ENCODE measurements at regions of chr17 and their contacts with region 1.

Region 1: DNA sequence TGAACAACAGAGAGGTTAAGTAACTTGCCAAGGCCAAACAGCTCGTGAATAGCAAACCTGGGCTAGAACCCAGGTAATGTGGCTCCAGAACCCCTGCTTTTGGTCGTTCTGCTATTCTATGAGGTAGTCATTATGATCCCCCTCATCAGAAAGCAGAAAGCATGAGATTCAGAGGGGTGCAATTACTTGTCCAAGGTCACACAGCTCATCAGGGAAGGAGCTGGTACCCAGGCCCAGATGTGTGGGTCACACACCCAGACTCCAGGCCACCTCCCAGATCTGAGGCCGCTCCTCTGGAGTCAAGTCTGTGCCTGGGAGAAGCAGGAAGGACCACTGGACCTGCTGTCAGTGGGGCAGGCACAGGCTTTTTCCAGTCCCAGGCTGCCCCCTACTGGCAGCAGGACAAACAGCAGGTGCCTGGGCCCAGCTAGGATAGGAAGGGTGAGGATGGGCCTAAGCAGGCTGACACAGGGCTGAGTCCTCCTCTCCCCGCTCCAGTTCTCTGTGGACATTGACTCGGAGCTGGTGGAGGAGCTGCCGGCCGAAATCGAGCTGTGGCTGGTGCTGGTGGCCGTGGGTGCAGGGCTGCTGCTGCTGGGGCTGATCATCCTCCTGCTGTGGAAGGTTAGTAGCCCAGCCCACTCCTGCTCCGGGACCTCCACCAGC is 7.8 kb upstream of the PDK2 start:
- DNase-seq: peak; percentile 87 to 93
- ATAC-seq: peak; percentile 76 to 93
- H3K4me3 ChIP-seq: no peak overlapping the region
- H3K27ac ChIP-seq: peak overlapping the region in 1 of 2 experiments; percentile 37; a peak in 2 of 6 replicates
- H3K4me1 ChIP-seq: no peaks in the 10 kb centered on the region
- CTCF ChIP-seq: peak; percentile 97
- EP300 ChIP-seq: no peak
- POLR2A ChIP-seq: no peak
- RAD21 ChIP-seq: peak; percentile 97 to 99

Region 2: DNA sequence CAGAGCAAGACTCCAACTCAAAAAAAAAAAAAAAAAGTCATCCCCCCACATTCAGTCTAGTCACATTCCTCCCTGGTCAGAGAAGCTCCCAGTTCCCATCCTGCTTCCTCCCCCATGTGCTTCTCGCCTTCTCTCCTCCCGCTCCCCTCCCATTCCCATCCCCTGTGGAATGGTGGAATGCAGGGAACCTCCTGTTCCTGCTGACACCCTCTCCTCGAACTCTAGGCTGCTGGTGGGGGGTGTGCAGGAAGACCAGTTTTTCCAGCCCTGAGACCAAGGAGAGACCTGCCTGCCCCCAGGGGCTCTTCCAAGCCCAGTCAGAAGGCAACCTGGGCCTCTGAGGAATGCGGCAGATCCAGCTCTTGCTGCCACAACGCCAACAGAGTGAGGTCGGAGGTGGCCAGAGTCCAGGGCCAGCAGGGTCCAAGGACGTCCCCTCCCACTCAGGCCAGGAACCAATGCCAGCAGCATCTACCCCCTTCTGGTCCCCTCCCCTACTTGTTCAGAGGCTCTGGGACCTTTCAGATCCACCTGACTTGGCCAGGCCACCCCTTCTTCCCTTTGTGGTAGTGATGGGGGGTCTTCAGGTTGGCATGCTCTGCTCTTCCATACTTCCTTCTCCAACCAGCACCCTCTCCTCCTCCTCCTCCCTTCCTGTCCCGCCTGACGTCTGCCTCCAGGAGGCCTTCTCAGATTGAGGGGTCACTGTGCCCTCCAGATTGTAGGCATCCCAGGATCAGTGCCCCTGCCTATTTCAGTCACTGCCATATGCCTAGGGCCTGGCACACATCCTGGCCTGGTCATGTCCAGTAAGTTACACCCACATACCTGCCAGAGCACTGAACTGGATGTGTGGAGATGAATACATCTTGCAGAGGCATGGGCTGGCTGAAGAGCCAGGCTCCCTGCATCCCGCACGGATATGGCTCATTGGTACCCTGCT is 200.0 kb before region 1 on chr17:
- CTCF ChIA-PET with region 1: no interaction called
- POLR2A ChIA-PET with region 1: no interaction called
- DNase-seq: no peak
- ATAC-seq: no peak
- H3K4me3 ChIP-seq: no peak overlapping the region
- H3K27ac ChIP-seq: no peak overlapping the region
- H3K4me1 ChIP-seq: no peaks in the 10 kb centered on the region
- CTCF ChIP-seq: no peak
- EP300 ChIP-seq: no peak
- POLR2A ChIP-seq: no peak
- RAD21 ChIP-seq: no peak

Region 3: DNA sequence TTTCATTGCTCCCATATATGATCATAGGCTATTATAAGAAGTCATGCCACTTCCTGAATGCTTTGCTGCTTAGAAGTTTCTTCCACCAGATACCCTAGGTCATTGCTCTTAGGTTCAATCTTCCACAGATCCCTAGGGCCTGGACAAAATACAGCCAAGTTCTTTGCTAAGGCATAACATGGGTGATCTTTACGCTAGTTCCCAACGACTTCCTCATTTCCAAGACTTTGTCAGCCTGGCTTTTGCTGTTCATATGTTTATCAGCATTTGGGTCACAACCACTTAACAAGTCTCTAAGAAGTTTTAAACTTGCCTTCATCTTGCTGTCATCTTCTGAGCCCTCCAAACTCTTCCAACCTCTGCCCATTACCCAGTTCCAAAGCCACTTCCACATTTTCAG is 72.2 kb before region 1 on chr17:
- CTCF ChIA-PET with region 1: interaction called, 30 read pairs
- POLR2A ChIA-PET with region 1: no interaction called
- DNase-seq: no peak
- ATAC-seq: no peak
- H3K4me3 ChIP-seq: no peak overlapping the region
- H3K27ac ChIP-seq: no peak overlapping the region
- H3K4me1 ChIP-seq: no peaks in the 10 kb centered on the region
- CTCF ChIP-seq: no peak
- EP300 ChIP-seq: no peak
- POLR2A ChIP-seq: no peak
- RAD21 ChIP-seq: no peak

Region 4: GRCh38 chr17:50037321-50038071 is 49.9 kb before region 1 on chr17:
- CTCF ChIA-PET with region 1: interaction called, 200 read pairs
- POLR2A ChIA-PET with region 1: no interaction called
- DNase-seq: peak in 1 of 2 experiments; percentile 77
- ATAC-seq: peak; percentile 85 to 94
- H3K4me3 ChIP-seq: no peak overlapping the region
- H3K27ac ChIP-seq: peak overlapping the region; percentile 82 to 88
- H3K4me1 ChIP-seq: peaks cover 43% of the 10 kb centered on the region
- CTCF ChIP-seq: no peak
- EP300 ChIP-seq: peak in 1 of 2 experiments; percentile 46; a peak in 1 of 5 replicates
- POLR2A ChIP-seq: no peak
- RAD21 ChIP-seq: 0 out of 5 replicates have a peak, but pooled peaks have one; percentile 16 to 22

Region 5: DNA sequence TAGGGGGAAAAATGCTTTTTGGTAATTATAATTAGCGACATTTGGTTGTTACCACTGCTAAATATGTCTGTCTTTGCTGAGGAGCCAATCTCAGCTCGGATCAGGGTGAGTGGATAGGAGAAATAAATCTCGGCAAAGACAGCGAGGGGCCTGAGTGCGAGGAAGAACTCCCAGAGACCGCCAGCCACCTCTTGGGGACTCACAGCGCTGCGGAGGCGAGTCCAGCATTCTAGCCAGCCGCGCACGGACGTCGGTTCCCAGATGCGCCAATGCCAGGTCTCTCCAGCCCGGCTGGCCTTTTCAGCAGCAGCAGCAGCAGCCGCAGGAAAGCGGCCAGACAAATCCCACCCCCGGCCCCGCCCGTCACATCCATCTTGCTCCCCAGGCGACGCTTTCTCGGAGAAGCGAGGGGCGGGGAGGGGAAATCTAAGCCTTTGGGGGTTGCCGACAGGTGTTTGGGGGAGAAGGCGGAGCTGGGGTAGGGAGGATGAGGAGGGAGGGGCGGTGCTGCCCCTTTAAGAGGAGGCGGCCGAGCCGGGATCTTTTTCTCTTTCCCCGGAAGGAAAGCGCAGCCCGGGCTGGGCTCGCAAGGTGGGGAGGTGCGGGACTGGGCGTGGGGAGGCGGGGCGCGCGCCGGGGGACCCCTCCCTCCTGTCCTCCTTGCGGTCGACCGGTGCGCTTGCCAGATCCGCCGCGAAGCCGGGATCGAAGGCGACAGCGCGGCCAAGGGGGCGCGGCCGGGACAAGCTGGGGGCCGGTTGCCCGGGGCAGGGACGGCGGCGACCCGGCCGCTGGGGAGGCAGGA is 31.8 kb before region 1 on chr17 and contains the start of gene ITGA3:
- CTCF ChIA-PET with region 1: interaction called, 345 read pairs
- POLR2A ChIA-PET with region 1: interaction called, 10 read pairs
- DNase-seq: peak; percentile 93 to 96
- ATAC-seq: peak; percentile 57 to 73
- H3K4me3 ChIP-seq: peak within 1 kb of the TSS; percentile 77
- H3K27ac ChIP-seq: peak within 1 kb of the TSS; percentile 92 to 97
- H3K4me1 ChIP-seq: peaks cover 74% of the 10 kb centered on the region
- CTCF ChIP-seq: no peak
- EP300 ChIP-seq: 0 out of 5 replicates have a peak, but pooled peaks of 1 of the 2 experiments have one; percentile 15
- POLR2A ChIP-seq: peak; percentile 95
- RAD21 ChIP-seq: peak; percentile 2 to 35; a peak in 1 of 5 replicates
- polyA plus RNA-seq, gene ITGA3: 141 and 181 TPM in 2 replicates

Region 6: DNA sequence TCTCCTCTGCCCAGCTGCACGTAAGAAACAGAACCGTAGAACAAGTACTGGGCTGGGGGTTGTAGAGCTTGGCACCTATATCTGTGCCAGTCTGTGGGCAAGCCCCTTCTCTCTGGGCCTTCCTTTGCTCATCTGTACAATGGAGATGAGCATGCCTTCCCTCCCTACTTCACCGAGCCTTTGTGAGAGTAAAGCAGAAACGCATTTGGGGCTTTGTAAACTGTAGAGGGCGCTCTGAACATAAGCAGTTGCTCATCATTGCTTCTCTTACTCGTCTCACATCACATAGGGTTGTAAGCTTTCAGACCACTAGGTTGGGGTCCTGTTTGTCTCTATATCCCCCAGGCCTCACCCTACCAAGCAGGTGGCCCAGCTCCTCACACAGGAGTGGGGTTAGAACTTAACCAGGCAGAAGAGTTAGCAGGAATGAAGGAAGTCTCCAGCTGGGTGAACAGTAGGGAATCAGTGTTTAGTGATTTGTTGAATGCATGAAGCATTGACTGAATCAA is 27.5 kb after region 1 on chr17:
- CTCF ChIA-PET with region 1: interaction called, 1,356 read pairs
- POLR2A ChIA-PET with region 1: no interaction called
- DNase-seq: peak; percentile 66 to 82
- ATAC-seq: peak; percentile 17 to 69; a peak in 4 of 6 replicates
- H3K4me3 ChIP-seq: no peak overlapping the region
- H3K27ac ChIP-seq: no peak overlapping the region
- H3K4me1 ChIP-seq: peaks cover 10% of the 10 kb centered on the region; the same call in 1 of the 3 replicates
- CTCF ChIP-seq: peak; percentile 76
- EP300 ChIP-seq: no peak
- POLR2A ChIP-seq: no peak
- RAD21 ChIP-seq: peak; percentile 66 to 83

Region 7: DNA sequence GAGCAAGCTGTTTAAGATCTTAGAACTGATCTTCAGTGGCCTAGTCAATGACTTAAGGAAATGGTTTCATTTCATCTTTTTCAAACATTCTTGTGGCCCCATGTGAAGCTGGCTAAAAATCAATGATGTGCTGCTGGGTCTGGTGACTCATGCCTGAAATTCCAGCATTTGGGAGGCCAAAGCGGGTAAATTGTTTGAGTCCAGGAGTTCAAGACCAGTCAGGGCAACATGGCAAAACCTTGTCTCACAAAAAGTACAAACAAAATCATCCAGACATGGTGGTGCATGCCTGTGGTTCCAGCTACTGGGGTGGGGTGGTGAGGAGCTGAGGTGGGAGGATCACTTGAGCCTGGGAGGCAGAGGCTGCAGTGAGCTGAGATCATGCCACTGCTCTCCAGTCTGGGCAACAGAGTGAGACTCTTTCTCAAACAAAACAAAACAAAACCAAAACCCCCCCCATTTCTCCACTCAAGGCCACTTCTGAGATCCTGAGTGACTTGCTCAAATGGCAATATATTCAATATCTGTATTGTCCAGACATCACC is 131.5 kb after region 1 on chr17:
- CTCF ChIA-PET with region 1: no interaction called
- POLR2A ChIA-PET with region 1: no interaction called
- DNase-seq: peak in 1 of 2 experiments; percentile 72
- ATAC-seq: peak; percentile 24 to 84; a peak in 4 of 6 replicates
- H3K4me3 ChIP-seq: 0 out of 3 replicates have a peak overlapping the region, but pooled peaks have one; percentile 8
- H3K27ac ChIP-seq: peak overlapping the region; percentile 67 to 87
- H3K4me1 ChIP-seq: peaks cover 43% of the 10 kb centered on the region
- CTCF ChIP-seq: no peak
- EP300 ChIP-seq: no peak
- POLR2A ChIP-seq: no peak
- RAD21 ChIP-seq: no peak

Measured in A549 (cell line).